Activated CD4-positive, alpha-beta T cell treated with anti-CD3 and anti-CD28 coated beads for 36 hours (primary cell): ENCODE measurements at regions of chr19 and their contacts with region 1.

Region 1: DNA sequence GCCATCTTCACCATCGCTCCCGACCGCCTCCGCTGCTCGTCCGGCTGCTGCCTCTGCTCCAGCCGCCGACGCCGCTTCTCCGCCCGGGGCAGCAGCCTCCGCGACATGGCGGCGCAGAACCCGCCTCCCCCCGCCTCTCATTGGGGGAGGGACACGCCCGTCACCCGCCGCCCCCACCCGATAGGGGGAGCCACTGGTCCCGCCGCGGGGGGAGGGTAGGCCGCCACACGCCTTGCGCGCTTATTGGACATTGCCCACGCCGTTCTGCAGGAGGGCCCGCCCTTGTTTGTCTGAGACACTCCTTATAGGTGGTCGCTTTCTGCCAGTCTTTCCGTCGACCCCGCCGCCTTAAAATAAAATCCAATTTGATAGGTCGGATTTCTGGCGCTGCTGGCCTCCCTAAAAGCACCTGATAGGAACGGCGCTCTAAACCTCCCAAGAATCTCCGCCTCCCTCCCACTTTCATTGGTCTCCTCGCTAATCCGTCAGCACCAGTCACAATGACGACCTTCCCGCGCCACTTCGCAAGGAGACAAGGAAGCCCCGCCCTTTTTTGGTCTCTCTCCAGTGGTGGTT is at the start of gene HNRNPL:
- DNase-seq: peak; percentile 99
- ATAC-seq: peak; percentile 71
- H3K4me3 Mint-ChIP-seq: peak within 1 kb of the TSS; percentile 97
- H3K27ac Mint-ChIP-seq: peak within 1 kb of the TSS; percentile 99
- H3K4me1 Mint-ChIP-seq: peaks cover 42% of the 10 kb centered on the region
- H3K27me3 Mint-ChIP-seq: no peaks in the 10 kb centered on the region
- total RNA-seq, gene HNRNPL: 714 to 722 TPM

Region 2: GRCh38 chr19:38315657-38316476 is 534.1 kb before region 1 on chr19 and contains the start of gene YIF1B:
- CTCF ChIA-PET with region 1: no interaction called
- POLR2A ChIA-PET with region 1: no interaction called
- intact Hi-C with region 1: loop called in 1 of 2 experiments (anchors 1 kb)
- DNase-seq: peak; percentile 97
- ATAC-seq: peak; percentile 95
- H3K4me3 Mint-ChIP-seq: peak within 1 kb of the TSS; percentile 94
- H3K27ac Mint-ChIP-seq: peak within 1 kb of the TSS; percentile 98
- H3K4me1 Mint-ChIP-seq: peaks cover 35% of the 10 kb centered on the region
- H3K27me3 Mint-ChIP-seq: no peaks in the 10 kb centered on the region
- total RNA-seq, gene YIF1B: 76.3 to 90.1 TPM

Region 3: GRCh38 chr19:38402967-38403861 is 446.7 kb before region 1 on chr19 and contains the start of gene FAM98C:
- CTCF ChIA-PET with region 1: no interaction called
- POLR2A ChIA-PET with region 1: no interaction called
- intact Hi-C with region 1: loop called in 1 of 2 experiments (anchors 1 kb)
- DNase-seq: peak; percentile 99
- ATAC-seq: peak; percentile 99
- H3K4me3 Mint-ChIP-seq: peak within 1 kb of the TSS; percentile 84
- H3K27ac Mint-ChIP-seq: peak within 1 kb of the TSS; percentile 85
- H3K4me1 Mint-ChIP-seq: peaks cover 16% of the 10 kb centered on the region
- H3K27me3 Mint-ChIP-seq: no peaks in the 10 kb centered on the region
- total RNA-seq, gene FAM98C: 19.6 to 24.8 TPM

Region 4: DNA sequence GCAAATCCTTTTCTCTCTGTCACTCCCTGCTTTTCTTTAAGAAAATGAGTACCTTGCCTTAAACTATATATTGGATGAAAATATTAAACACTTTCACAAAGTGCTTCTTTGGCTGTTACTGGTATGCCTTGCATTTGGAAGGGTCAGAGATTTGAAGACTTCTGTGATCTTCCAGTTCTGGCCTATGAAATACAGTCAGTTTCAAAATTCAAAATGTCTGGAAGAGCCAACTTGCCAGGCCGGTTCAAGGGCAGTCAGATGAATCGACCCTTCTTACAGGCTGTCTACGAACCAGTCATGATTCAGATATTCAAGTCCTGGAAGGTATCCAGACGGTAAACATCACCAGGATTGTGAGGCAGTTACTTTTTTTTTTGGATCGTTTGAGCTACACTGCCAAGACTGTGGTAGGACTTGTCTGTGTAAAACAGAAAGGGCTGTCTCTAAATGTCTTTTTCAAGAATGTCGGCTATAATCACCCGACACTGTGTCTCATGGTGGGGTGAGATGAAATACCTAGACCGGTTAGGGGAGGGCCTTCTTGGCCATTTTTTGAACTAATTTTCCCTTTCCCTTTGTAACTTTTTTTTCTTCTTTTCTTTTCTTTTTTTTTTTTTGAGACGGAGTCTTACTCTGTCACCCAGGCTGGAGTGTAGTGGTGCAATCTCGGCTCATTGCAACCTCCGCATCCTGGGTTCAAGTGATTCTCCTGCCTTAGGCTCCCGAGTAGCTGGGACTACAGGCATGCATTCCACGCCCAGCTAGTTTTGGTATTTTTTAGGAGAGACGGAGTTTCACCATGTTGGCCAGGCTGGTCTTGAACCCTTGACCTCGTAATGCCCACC is 191.3 kb before region 1 on chr19:
- CTCF ChIA-PET with region 1: no interaction called
- POLR2A ChIA-PET with region 1: no interaction called
- intact Hi-C with region 1: loop called in 1 of 2 experiments (anchors 5 kb)
- DNase-seq: no peak
- ATAC-seq: no peak
- H3K4me3 Mint-ChIP-seq: no peak overlapping the region
- H3K27ac Mint-ChIP-seq: no peak overlapping the region
- H3K4me1 Mint-ChIP-seq: peaks cover 69% of the 10 kb centered on the region
- H3K27me3 Mint-ChIP-seq: peaks cover 3% of the 10 kb centered on the region

Region 5: DNA sequence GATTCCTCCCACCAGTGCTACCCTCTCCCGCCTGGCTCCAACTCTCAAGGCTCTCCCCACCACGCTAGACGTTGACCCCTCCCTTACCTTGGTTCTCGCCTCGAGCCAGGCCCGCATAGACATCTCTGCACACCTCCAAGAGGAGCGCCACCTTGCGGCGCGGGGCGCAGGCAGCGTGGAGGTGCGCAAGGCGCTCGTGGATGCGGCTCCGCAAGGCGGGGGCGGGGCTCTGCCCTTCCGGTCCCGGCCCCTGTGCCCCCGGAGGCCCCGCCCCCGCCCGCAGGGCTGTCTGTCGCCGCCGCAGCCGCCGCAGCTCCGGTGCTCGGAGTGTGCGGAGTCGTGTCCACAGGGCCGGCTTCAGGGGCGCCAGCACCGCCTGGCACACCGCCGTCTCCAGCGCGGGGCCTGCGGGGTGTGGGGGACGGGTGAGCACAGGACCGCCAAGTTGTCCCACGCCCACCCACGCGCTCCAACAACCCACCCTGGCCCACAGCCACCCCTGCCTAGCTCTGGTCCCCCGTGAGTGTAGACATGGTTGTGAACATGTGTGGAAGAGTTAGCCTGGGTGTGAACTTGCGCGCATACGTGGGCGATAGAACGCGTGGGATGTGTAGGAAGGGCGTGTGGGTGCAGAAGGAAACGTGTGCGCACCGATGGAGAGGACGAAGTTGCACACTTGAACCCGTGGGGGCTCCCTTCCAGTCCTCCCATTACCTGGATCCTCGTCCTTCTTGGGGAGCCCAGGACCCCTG is 20.1 kb after region 1 on chr19:
- CTCF ChIA-PET with region 1: interaction called, 7 read pairs
- POLR2A ChIA-PET with region 1: interaction called, 11 read pairs
- intact Hi-C with region 1: loop called (anchors 1 kb)
- DNase-seq: peak; percentile 94
- ATAC-seq: peak; percentile 85
- H3K4me3 Mint-ChIP-seq: peak overlapping the region; percentile 76
- H3K27ac Mint-ChIP-seq: peak overlapping the region; percentile 86
- H3K4me1 Mint-ChIP-seq: peaks cover 37% of the 10 kb centered on the region
- H3K27me3 Mint-ChIP-seq: no peaks in the 10 kb centered on the region

Region 6: GRCh38 chr19:39341719-39342604 is 492.0 kb after region 1 on chr19 and contains the start of gene SAMD4B:
- CTCF ChIA-PET with region 1: no interaction called
- POLR2A ChIA-PET with region 1: no interaction called
- intact Hi-C with region 1: loop called in 1 of 2 experiments (anchors 1 kb)
- DNase-seq: peak; percentile 100
- ATAC-seq: peak; percentile 90
- H3K4me3 Mint-ChIP-seq: peak within 1 kb of the TSS; percentile 83
- H3K27ac Mint-ChIP-seq: peak within 1 kb of the TSS; percentile 88
- H3K4me1 Mint-ChIP-seq: peaks cover 69% of the 10 kb centered on the region
- H3K27me3 Mint-ChIP-seq: no peaks in the 10 kb centered on the region
- total RNA-seq, gene SAMD4B: 45.2 to 46.9 TPM